ENCODE measurements at regions of chr16 and their contacts with region 1.

Region 1: GRCh38 chr16:30032083-30032819 is 1.2 kb upstream of the TLCD3B start:
- DNase-seq: peak; percentile 57
- H3K4me3 Mint-ChIP-seq: peak overlapping the region; percentile 27
- H3K27ac Mint-ChIP-seq: no peak overlapping the region
- H3K4me1 Mint-ChIP-seq: peaks cover 12% of the 10 kb centered on the region
- H3K27me3 Mint-ChIP-seq: peaks cover 48% of the 10 kb centered on the region

Region 2: DNA sequence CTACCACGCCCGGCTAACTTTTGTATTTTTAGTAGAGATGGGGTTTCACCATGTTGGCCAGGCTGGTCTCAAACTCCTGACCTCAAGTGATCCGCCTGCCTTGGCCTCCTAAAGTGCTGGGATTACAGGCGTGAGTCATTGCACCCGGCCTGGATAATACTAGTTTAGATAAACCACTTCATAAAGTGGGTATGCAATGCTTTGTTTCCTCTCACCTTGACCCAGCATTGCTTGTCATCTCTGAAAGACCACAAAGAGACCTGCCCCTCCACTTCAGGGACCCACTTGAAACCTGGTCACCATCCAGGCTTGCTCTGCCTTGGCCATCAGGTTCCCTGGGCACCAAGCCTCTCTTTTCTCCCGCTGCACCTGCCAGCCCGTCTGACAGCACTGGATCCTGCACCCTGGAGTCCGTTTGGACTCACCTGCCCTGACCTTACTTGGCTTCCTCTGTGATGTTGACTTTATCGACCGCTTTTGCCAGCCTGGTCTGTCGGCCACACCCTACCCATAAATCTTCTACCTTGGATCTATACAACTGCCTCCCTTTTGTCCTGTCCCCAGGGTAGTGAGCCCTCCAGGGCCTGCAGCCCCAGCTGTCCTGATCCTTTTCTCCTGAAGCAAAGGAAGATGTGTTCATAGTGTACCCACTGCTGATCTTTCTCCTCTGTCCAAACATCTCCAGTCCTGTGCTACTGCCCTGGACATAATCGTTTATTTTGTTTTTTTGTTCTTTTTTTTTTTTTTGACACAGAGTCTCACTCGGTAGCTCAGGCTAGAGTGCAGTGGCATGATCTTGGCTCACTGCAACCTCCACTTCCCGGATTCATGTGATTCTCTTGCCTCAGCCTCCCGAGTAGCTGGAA is 266.9 kb before region 1 on chr16:
- intact Hi-C with region 1: no loop called
- DNase-seq: no peak
- H3K4me3 Mint-ChIP-seq: no peak overlapping the region
- H3K27ac Mint-ChIP-seq: no peak overlapping the region
- H3K4me1 Mint-ChIP-seq: no peaks in the 10 kb centered on the region
- H3K27me3 Mint-ChIP-seq: peaks cover 2% of the 10 kb centered on the region

Region 3: GRCh38 chr16:29877266-29877961 is 154.8 kb before region 1 on chr16:
- intact Hi-C with region 1: loop called (anchors 10 kb)
- DNase-seq: peak; percentile 57
- H3K4me3 Mint-ChIP-seq: peak overlapping the region; percentile 51
- H3K27ac Mint-ChIP-seq: no peak overlapping the region
- H3K4me1 Mint-ChIP-seq: peaks cover 6% of the 10 kb centered on the region
- H3K27me3 Mint-ChIP-seq: peaks cover 24% of the 10 kb centered on the region

Measured in activated T-helper 2 cell treated with anti-CD3 and anti-CD28 coated beads, Interferon-gamma antibody, Interleukin-2, Interleukin-4, amounts not matched to agents 10 μg/mL and 5 μg/mL and 100 μg/mL, durations not matched to agents 14 hours and 24 hours and 36 hours (primary cell).